ENCODE measurements at regions of chr10 and their contacts with region 1.

Region 1: DNA sequence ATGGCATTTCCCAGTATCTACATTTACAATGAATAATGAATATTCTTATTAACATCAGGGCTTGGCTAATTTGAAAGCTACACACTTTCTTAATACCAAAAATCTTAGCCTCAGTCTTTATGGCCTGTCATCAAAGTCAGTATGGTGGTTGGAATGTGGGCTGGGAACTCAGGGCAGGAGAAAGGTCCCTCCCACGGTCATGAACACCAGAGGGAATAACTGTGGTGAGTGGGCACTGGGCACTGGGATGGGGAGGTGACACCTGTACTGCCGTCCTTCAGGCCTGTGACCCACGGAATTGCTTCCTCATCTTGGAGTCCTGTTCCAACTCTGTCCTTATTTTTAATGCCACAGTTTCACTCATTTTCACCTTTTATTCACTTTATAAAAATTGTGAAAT is 276.9 kb upstream of the PLPP4 start:
- DNase-seq: no peak
- H3K4me3 ChIP-seq: no peak overlapping the region
- H3K27ac ChIP-seq: no peak overlapping the region
- H3K27me3 ChIP-seq: no peaks in the 10 kb centered on the region
- CTCF ChIP-seq: no peak

Region 2: GRCh38 chr10:120328647-120329046 is 148.5 kb after region 1 on chr10:
- CTCF ChIA-PET with region 1: interaction called, 10 read pairs
- POLR2A ChIA-PET with region 1: no interaction called
- DNase-seq: no peak
- H3K4me3 ChIP-seq: no peak overlapping the region
- H3K27ac ChIP-seq: no peak overlapping the region
- H3K27me3 ChIP-seq: no peaks in the 10 kb centered on the region
- CTCF ChIP-seq: no peak

Region 3: GRCh38 chr10:120477021-120477742 is 297.0 kb after region 1 on chr10:
- CTCF ChIA-PET with region 1: no interaction called
- POLR2A ChIA-PET with region 1: no interaction called
- DNase-seq: no peak
- H3K4me3 ChIP-seq: no peak overlapping the region
- H3K27ac ChIP-seq: no peak overlapping the region
- H3K27me3 ChIP-seq: no peaks in the 10 kb centered on the region
- CTCF ChIP-seq: no peak